ENCODE measurements at regions of chr17 and their contacts with region 1.

Region 1: DNA sequence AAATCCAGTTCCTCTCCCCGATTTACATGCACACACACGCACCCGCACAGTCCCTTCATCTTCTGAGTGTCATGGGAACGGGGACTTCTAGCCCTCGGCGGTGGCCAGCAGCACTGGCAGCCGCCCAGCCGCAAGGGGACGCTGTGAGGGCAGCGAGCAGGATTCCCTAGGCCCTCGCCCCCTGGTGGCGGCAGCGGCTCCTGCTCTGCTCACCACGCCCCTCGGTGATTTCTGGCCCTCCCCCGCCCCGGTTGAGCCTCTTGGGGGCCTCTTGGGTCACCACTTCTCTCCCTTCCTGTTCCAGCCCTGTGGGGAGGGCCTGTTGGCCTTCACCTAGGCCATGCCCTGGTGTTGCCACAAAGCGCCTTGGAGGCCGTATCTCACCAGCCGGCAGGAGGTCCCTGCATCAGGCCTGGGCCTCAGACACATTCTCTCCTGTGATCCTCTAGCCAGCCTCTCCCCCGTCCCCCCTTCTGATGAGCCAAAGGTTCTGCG is 75.2 kb upstream of the KSR1 start:
- DNase-seq: peak; percentile 78 to 90
- ATAC-seq: peak; percentile 73 to 92
- H3K4me3 ChIP-seq: no peak overlapping the region; the same call in 2 of the 3 replicates
- H3K27ac ChIP-seq: peak overlapping the region in 1 of 2 experiments; percentile 71; a peak in 3 of 6 replicates
- H3K4me1 ChIP-seq: peaks cover 33% of the 10 kb centered on the region
- CTCF ChIP-seq: peak; percentile 96
- EP300 ChIP-seq: no peak
- POLR2A ChIP-seq: no peak
- RAD21 ChIP-seq: peak; percentile 62 to 66

Region 2: GRCh38 chr17:27245230-27245696 is 135.8 kb before region 1 on chr17:
- CTCF ChIA-PET with region 1: interaction called, 13 read pairs
- POLR2A ChIA-PET with region 1: no interaction called
- DNase-seq: peak; percentile 90 to 95
- ATAC-seq: peak; percentile 87 to 95
- H3K4me3 ChIP-seq: no peak overlapping the region
- H3K27ac ChIP-seq: peak overlapping the region; percentile 72 to 85
- H3K4me1 ChIP-seq: peaks cover 61% of the 10 kb centered on the region
- CTCF ChIP-seq: peak; percentile 87
- EP300 ChIP-seq: no peak
- POLR2A ChIP-seq: no peak
- RAD21 ChIP-seq: peak; percentile 96 to 99

Region 3: GRCh38 chr17:27360507-27360906 is 20.5 kb before region 1 on chr17:
- CTCF ChIA-PET with region 1: interaction called, 58 read pairs
- POLR2A ChIA-PET with region 1: no interaction called
- DNase-seq: no peak
- ATAC-seq: no peak
- H3K4me3 ChIP-seq: no peak overlapping the region
- H3K27ac ChIP-seq: no peak overlapping the region
- H3K4me1 ChIP-seq: peaks cover 11% of the 10 kb centered on the region; the same call in 2 of the 3 replicates
- CTCF ChIP-seq: no peak
- EP300 ChIP-seq: no peak
- POLR2A ChIP-seq: no peak
- RAD21 ChIP-seq: no peak

Region 4: GRCh38 chr17:27396941-27397340 is 15.9 kb after region 1 on chr17:
- CTCF ChIA-PET with region 1: interaction called, 17 read pairs
- POLR2A ChIA-PET with region 1: no interaction called
- DNase-seq: no peak
- ATAC-seq: no peak
- H3K4me3 ChIP-seq: no peak overlapping the region
- H3K27ac ChIP-seq: no peak overlapping the region
- H3K4me1 ChIP-seq: no peaks in the 10 kb centered on the region
- CTCF ChIP-seq: no peak
- EP300 ChIP-seq: no peak
- POLR2A ChIP-seq: no peak
- RAD21 ChIP-seq: no peak

Region 5: DNA sequence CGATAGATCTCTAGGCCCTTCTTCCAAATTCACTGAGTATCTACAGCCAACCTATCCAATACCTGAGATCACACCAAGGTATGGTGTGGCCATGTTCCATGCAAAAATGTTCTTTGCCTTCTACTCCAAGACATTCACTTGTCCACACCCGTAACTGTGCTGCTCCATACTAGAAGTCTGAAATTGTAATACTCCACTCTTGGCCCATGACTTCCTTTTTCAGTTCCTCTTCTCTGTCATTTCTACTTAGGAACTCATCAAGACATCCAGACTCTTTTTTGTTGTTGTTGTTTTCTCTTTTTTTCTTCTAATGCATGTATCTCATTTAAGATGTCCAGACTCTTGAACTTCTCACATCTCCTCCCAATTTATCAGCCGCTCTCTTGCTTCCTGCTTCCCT is 32.7 kb after region 1 on chr17:
- CTCF ChIA-PET with region 1: interaction called, 42 read pairs
- POLR2A ChIA-PET with region 1: interaction called, 6 read pairs
- DNase-seq: no peak
- ATAC-seq: no peak
- H3K4me3 ChIP-seq: no peak overlapping the region
- H3K27ac ChIP-seq: no peak overlapping the region
- H3K4me1 ChIP-seq: peaks cover 22% of the 10 kb centered on the region
- CTCF ChIP-seq: no peak
- EP300 ChIP-seq: no peak
- POLR2A ChIP-seq: no peak
- RAD21 ChIP-seq: no peak

Region 6: GRCh38 chr17:27455914-27456680 is 75.0 kb after region 1 on chr17 and contains the start of gene KSR1:
- CTCF ChIA-PET with region 1: interaction called, 15 read pairs
- POLR2A ChIA-PET with region 1: no interaction called
- DNase-seq: peak; percentile 82 to 85
- ATAC-seq: peak; percentile 93 to 94
- H3K4me3 ChIP-seq: peak within 1 kb of the TSS; percentile 73
- H3K27ac ChIP-seq: peak within 1 kb of the TSS; percentile 86 to 95
- H3K4me1 ChIP-seq: peaks cover 39% of the 10 kb centered on the region
- CTCF ChIP-seq: peak; percentile 64
- EP300 ChIP-seq: no peak
- POLR2A ChIP-seq: peak; percentile 56
- RAD21 ChIP-seq: peak; percentile 67 to 74
- polyA plus RNA-seq, gene KSR1: 13.3 and 23.0 TPM in 2 replicates